CD4-positive, alpha-beta memory T cell (primary cell): ENCODE measurements at regions of chr1 and their contacts with region 1.

Region 1: GRCh38 chr1:18913065-18913835 is 10.9 kb upstream of the ALDH4A1 start:
- DNase-seq: peak; percentile 64 to 71 (median 66)
- H3K4me3 ChIP-seq: no peak overlapping the region
- H3K4me3 Mint-ChIP-seq: peak overlapping the region in 1 of 8 donors; percentile 41
- H3K27ac ChIP-seq: peak overlapping the region; percentile 5
- H3K27ac Mint-ChIP-seq: peak overlapping the region; percentile 62 to 90 (median 82)
- H3K4me1 ChIP-seq: no peaks in the 10 kb centered on the region
- H3K4me1 Mint-ChIP-seq: peaks cover 5 to 21% (median 8%) of the 10 kb centered on the region in 4 donors
- H3K27me3 ChIP-seq: no peaks in the 10 kb centered on the region
- H3K27me3 Mint-ChIP-seq: no peaks in the 10 kb centered on the region

Region 2: GRCh38 chr1:18868801-18869424 is 44.3 kb before region 1 on chr1:
- CTCF ChIA-PET with region 1: no interaction called
- POLR2A ChIA-PET with region 1: no interaction called
- intact Hi-C with region 1: no loop called
- DNase-seq: no peak
- H3K4me3 ChIP-seq: no peak overlapping the region
- H3K4me3 Mint-ChIP-seq: no peak overlapping the region
- H3K27ac ChIP-seq: no peak overlapping the region
- H3K27ac Mint-ChIP-seq: peak overlapping the region in 1 of 7 donors; percentile 23
- H3K4me1 ChIP-seq: no peaks in the 10 kb centered on the region
- H3K4me1 Mint-ChIP-seq: no peaks in the 10 kb centered on the region
- H3K27me3 ChIP-seq: no peaks in the 10 kb centered on the region
- H3K27me3 Mint-ChIP-seq: peaks cover 1 to 8% of the 10 kb centered on the region in 2 donors

Region 3: GRCh38 chr1:18883636-18884418 is 29.4 kb before region 1 on chr1:
- CTCF ChIA-PET with region 1: interaction called, 34 read pairs
- POLR2A ChIA-PET with region 1: no interaction called
- intact Hi-C with region 1: no loop called
- DNase-seq: peak; percentile 55 to 68 (median 58)
- H3K4me3 ChIP-seq: no peak overlapping the region
- H3K4me3 Mint-ChIP-seq: no peak overlapping the region
- H3K27ac ChIP-seq: no peak overlapping the region
- H3K27ac Mint-ChIP-seq: peak overlapping the region in 1 of 7 donors; percentile 38
- H3K4me1 ChIP-seq: no peaks in the 10 kb centered on the region
- H3K4me1 Mint-ChIP-seq: peaks cover 0 to 5% (median 0%) of the 10 kb centered on the region in 4 donors
- H3K27me3 ChIP-seq: no peaks in the 10 kb centered on the region
- H3K27me3 Mint-ChIP-seq: no peaks in the 10 kb centered on the region

Region 4: DNA sequence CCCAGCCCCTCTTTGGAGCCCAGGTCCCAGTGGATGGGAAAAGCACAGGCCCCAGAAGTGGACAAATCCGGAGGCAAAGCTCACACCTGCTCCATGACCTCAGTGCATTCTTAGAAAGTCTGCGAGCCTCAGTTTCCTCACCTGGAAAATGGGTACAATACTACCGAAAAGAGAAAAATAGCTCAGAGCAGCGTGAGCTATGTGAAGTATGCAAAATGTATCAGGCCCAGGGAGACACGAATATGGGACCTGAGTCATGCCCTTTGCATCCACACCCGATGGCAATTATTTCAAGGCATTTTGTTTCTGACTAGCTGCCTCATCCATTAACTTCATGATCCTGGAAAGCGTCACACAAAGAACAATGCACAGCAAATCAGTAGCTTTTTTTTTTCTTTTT is 20.1 kb before region 1 on chr1:
- CTCF ChIA-PET with region 1: interaction called, 20 read pairs
- POLR2A ChIA-PET with region 1: no interaction called
- intact Hi-C with region 1: no loop called
- DNase-seq: peak in 1 of 5 donors; percentile 8
- H3K4me3 ChIP-seq: no peak overlapping the region
- H3K4me3 Mint-ChIP-seq: no peak overlapping the region
- H3K27ac ChIP-seq: no peak overlapping the region
- H3K27ac Mint-ChIP-seq: peak overlapping the region in 1 of 7 donors; percentile 19
- H3K4me1 ChIP-seq: no peaks in the 10 kb centered on the region
- H3K4me1 Mint-ChIP-seq: no peaks in the 10 kb centered on the region
- H3K27me3 ChIP-seq: no peaks in the 10 kb centered on the region
- H3K27me3 Mint-ChIP-seq: no peaks in the 10 kb centered on the region

Region 5: DNA sequence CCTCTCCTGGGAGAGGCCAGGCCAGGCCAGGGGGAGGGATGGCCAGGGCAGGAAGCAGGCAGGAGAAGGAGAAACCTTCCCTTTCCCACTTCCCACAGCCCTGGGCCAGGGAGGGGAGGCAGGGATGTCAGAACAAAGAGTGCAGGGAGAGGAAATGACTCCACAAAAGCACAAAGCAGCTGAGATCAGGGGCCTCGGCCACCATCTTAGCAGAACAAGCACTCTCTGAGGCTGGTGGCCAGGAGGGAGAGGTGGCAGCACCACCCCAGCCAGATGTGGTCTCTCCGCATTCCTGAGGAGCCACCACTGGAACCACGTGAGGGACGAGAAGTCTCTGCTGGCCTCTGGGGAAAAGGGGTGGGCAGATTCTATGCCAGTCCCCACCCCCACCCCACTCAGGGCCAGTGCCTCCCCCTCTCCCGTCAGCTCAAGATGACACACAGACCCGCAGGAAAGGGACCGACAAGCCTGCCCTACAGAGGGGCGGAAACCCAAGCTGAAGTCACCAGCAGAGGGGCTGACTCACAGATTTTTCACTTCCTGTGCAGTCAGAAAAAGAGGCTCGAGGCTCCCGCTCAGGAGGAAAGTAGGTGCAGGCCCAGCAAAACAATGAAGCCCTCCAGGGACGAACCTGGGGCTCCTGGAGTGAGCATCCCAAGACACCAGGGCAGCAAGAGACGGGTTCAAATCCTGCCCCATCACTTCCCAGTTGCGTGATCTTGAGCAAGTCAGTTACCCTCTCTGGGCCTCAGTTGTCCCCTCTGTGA is 13.2 kb after region 1 on chr1:
- CTCF ChIA-PET with region 1: interaction called, 193 read pairs
- POLR2A ChIA-PET with region 1: interaction called, 34 read pairs
- intact Hi-C with region 1: loop called (anchors 1 kb)
- DNase-seq: peak; percentile 75 to 95 (median 78)
- H3K4me3 ChIP-seq: peak overlapping the region; percentile 45 to 58
- H3K4me3 Mint-ChIP-seq: peak overlapping the region; percentile 78 to 89 (median 84)
- H3K27ac ChIP-seq: peak overlapping the region; percentile 75
- H3K27ac Mint-ChIP-seq: peak overlapping the region; percentile 87 to 99 (median 98)
- H3K4me1 ChIP-seq: peaks cover 99% of the 10 kb centered on the region
- H3K4me1 Mint-ChIP-seq: peaks cover 48 to 98% (median 83%) of the 10 kb centered on the region in 4 donors
- H3K27me3 ChIP-seq: no peaks in the 10 kb centered on the region
- H3K27me3 Mint-ChIP-seq: no peaks in the 10 kb centered on the region

Region 6: GRCh38 chr1:18941221-18942141 is 28.2 kb after region 1 on chr1:
- CTCF ChIA-PET with region 1: interaction called, 14 read pairs
- POLR2A ChIA-PET with region 1: interaction called, 3 read pairs
- intact Hi-C with region 1: no loop called
- DNase-seq: no peak
- H3K4me3 ChIP-seq: no peak overlapping the region
- H3K4me3 Mint-ChIP-seq: no peak overlapping the region
- H3K27ac ChIP-seq: peak overlapping the region; percentile 0
- H3K27ac Mint-ChIP-seq: peak overlapping the region; percentile 46 to 94 (median 70)
- H3K4me1 ChIP-seq: peaks cover 96% of the 10 kb centered on the region
- H3K4me1 Mint-ChIP-seq: peaks cover 49 to 93% (median 78%) of the 10 kb centered on the region in 4 donors
- H3K27me3 ChIP-seq: no peaks in the 10 kb centered on the region
- H3K27me3 Mint-ChIP-seq: no peaks in the 10 kb centered on the region

Region 7: DNA sequence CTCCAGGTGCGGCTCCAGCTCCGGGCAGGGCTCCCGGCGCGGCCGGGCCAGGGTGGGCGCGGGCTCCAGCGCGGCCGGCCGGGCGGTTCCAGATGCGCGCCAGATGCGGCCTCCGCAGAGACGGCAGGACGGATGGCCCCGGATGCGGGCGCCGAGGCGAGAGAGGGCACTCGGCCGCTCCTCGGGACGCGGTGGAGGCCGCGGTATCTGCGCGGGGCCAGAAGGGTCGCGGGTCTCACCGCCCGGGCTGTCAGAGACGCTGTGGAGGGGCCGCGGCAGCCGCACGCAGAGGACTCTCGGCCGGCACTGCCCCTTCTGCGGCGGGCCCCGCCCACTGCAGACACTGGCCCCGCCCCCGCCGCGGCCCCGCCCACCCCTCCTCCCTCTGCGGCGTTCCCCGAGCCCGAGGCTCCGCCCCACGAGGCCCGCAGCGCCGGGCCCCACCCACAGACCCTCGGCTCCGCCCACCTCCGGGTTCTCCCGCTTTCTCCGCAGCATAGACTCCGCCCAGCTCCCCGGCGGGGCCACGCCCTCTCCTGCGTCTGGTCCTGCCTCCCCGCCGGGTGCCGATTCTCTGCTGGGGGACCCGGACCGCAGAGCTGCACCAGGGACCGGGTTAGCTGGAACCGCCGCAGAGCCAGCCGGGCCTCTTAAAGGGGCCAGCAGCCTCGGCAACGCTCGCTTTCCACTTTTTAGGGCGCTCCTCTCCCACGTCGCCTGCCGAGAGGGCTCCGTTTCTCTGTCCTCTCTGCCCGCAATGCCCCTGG is 43.3 kb after region 1 on chr1 and contains the start of gene IFFO2:
- CTCF ChIA-PET with region 1: interaction called, 443 read pairs
- POLR2A ChIA-PET with region 1: interaction called, 22 read pairs
- intact Hi-C with region 1: no loop called
- DNase-seq: peak; percentile 96 to 99 (median 97)
- H3K4me3 ChIP-seq: peak within 1 kb of the TSS in 1 of 2 donors; percentile 74
- H3K4me3 Mint-ChIP-seq: peak within 1 kb of the TSS; percentile 93 to 98 (median 94)
- H3K27ac ChIP-seq: peak within 1 kb of the TSS; percentile 98
- H3K27ac Mint-ChIP-seq: peak within 1 kb of the TSS; percentile 79 to 100 (median 99)
- H3K4me1 ChIP-seq: peaks cover 55% of the 10 kb centered on the region
- H3K4me1 Mint-ChIP-seq: peaks cover 31 to 66% (median 47%) of the 10 kb centered on the region in 4 donors
- H3K27me3 ChIP-seq: no peaks in the 10 kb centered on the region
- H3K27me3 Mint-ChIP-seq: no peaks in the 10 kb centered on the region
- total RNA-seq, gene IFFO2: 39.0 to 41.3 TPM